ENCODE measurements at regions of chr7 and their contacts with region 1.

Region 1: GRCh38 chr7:43582503-43583423 is at the start of gene STK17A:
- DNase-seq: peak; percentile 95 to 96 (median 95)
- ATAC-seq: peak; percentile 91 to 98 (median 95)
- H3K4me3 ChIP-seq: peak within 1 kb of the TSS; percentile 84 to 93 (median 93)
- H3K27ac ChIP-seq: peak within 1 kb of the TSS; percentile 71 to 93 (median 87)
- H3K4me1 ChIP-seq: peaks cover 0 to 25% (median 6%) of the 10 kb centered on the region in 4 donors
- H3K27me3 ChIP-seq: no peaks in the 10 kb centered on the region
- CTCF ChIP-seq: peak; percentile 91 to 100 (median 97)
- POLR2A ChIP-seq: peak; percentile 92
- total RNA-seq, gene STK17A: 1.7 to 20.9 (median 7.9) TPM

Region 2: DNA sequence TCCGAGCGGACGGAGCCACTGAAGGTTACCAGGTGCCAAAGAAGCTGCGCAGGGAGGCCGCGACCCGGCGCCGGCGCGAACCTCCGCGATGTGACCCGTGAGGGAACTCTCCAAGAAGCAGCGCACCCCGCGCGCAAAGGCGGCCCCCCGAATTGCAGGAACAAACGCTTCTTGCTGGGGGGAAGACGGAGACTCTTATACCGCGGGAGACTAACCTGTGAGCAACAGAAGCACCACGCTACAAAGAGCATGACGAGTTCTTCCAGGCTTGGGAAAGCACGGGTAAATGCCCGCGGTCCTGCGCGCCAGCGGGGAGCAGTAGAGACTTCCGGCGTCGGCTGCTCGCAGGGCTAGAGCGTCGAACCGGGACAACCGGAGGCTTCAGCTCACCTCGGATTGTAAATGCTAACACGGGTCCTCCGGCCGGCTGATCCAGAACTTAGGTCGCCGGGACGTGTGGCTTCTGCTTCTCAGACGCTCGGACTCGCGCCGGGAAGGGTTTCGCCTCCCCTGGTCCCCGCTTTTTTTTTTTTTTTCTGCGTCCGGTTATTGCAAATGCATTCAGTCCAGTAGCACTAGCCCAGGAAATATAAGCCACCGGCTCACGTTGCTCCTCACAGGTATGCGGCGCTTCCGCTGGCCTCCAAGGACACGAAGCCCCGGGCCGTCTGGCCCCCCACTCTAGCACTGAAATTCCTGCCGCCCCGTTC is 146.6 kb after region 1 on chr7 and contains the start of gene COA1:
- intact Hi-C with region 1: loop called in 1 of 2 experiments (anchors 10 kb)
- DNase-seq: peak; percentile 85 to 91 (median 89)
- ATAC-seq: peak; percentile 99 to 100 (median 100)
- H3K4me3 ChIP-seq: peak within 1 kb of the TSS; percentile 74 to 90 (median 79)
- H3K27ac ChIP-seq: peak within 1 kb of the TSS; percentile 41 to 58 (median 56)
- H3K4me1 ChIP-seq: peaks cover 0 to 15% (median 2%) of the 10 kb centered on the region in 4 donors
- H3K27me3 ChIP-seq: no peaks in the 10 kb centered on the region
- CTCF ChIP-seq: peak in 1 of 4 donors; percentile 7
- POLR2A ChIP-seq: peak; percentile 59
- total RNA-seq, gene COA1: 15.8 to 35.6 (median 19.9) TPM

Region 3: DNA sequence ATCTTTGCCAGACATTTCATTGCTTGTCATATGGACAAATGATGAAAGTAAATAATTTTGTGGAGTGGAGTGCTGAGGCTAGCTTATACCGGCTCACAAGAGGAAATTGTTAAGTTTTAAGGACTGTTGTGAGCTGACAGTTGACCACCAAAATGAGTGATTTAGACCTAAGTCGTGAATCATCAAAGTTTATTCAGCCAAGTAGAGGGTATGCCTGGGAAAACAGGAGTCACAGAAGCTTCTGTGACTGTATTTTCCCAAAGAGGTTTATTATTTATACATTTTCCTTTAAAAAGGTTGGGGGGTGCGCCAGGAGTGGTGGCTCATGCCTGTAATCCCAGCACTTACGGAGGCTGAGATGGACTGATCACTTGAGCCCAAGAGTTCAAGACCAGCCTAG is 264.7 kb after region 1 on chr7:
- intact Hi-C with region 1: loop called in 1 of 2 experiments (anchors 10 kb)
- DNase-seq: no peak
- ATAC-seq: no peak
- H3K4me3 ChIP-seq: no peak overlapping the region
- H3K27ac ChIP-seq: no peak overlapping the region
- H3K4me1 ChIP-seq: no peaks in the 10 kb centered on the region
- H3K27me3 ChIP-seq: no peaks in the 10 kb centered on the region
- CTCF ChIP-seq: no peak
- POLR2A ChIP-seq: no peak